GM12878 (cell line): ENCODE measurements at regions of chr9 and their contacts with region 1.

Region 1: GRCh38 chr9:7320139-7320538 is 479.4 kb downstream of the DMAC1 start:
- DNase-seq: no peak
- ATAC-seq: peak; percentile 39; the same call in 2 of the 3 replicates
- H3K4me3 ChIP-seq: no peak overlapping the region
- H3K27ac ChIP-seq: no peak overlapping the region
- H3K4me1 ChIP-seq: no peaks in the 10 kb centered on the region
- H3K27me3 ChIP-seq: no peaks in the 10 kb centered on the region
- CTCF ChIP-seq: no peak
- EP300 ChIP-seq: no peak
- POLR2A ChIP-seq: no peak
- RAD21 ChIP-seq: no peak

Region 2: DNA sequence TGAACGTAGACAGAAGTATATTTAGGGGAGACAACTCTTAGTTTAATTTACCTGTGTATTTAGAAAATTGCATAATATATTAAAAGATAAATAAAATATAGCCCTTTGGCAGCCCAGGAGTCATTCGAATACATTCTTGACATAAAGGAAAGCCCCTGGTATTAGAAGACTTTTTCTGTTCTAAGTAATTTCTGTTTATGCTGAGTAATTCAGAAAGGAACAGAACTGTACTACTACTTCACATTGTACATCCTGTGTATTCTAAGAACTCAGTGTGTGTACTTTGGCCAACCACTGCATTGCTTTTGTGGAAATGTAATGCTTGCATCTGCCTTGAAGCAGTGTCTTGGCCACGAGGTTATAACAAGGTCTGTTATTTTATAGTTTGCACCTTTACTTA is 426.0 kb before region 1 on chr9:
- CTCF ChIA-PET with region 1: no interaction called
- POLR2A ChIA-PET with region 1: no interaction called
- RAD21 ChIA-PET with region 1: no interaction called
- SMC1A ChIA-PET with region 1: no interaction called
- in situ Hi-C with region 1: no loop called
- intact Hi-C with region 1: no loop called
- DNase-seq: peak; percentile 63
- ATAC-seq: peak; percentile 96
- H3K4me3 ChIP-seq: no peak overlapping the region
- H3K27ac ChIP-seq: peak overlapping the region; percentile 56
- H3K4me1 ChIP-seq: peaks cover 28% of the 10 kb centered on the region
- H3K27me3 ChIP-seq: no peaks in the 10 kb centered on the region
- CTCF ChIP-seq: no peak
- EP300 ChIP-seq: peak in 1 of 2 experiments; percentile 75; a peak in 2 of 4 replicates
- POLR2A ChIP-seq: no peak
- RAD21 ChIP-seq: no peak

Region 3: GRCh38 chr9:7216004-7216831 is 103.9 kb before region 1 on chr9:
- CTCF ChIA-PET with region 1: no interaction called
- POLR2A ChIA-PET with region 1: no interaction called
- RAD21 ChIA-PET with region 1: no interaction called
- SMC1A ChIA-PET with region 1: no interaction called
- in situ Hi-C with region 1: loop called (anchors 25 kb)
- intact Hi-C with region 1: no loop called
- DNase-seq: no peak
- ATAC-seq: no peak
- H3K4me3 ChIP-seq: no peak overlapping the region
- H3K27ac ChIP-seq: no peak overlapping the region
- H3K4me1 ChIP-seq: no peaks in the 10 kb centered on the region
- H3K27me3 ChIP-seq: no peaks in the 10 kb centered on the region; a peak in 1 of 4 replicates
- CTCF ChIP-seq: no peak
- EP300 ChIP-seq: no peak
- POLR2A ChIP-seq: no peak
- RAD21 ChIP-seq: no peak

Region 4: GRCh38 chr9:7273391-7273974 is 46.7 kb before region 1 on chr9:
- CTCF ChIA-PET with region 1: no interaction called
- POLR2A ChIA-PET with region 1: no interaction called
- RAD21 ChIA-PET with region 1: no interaction called
- SMC1A ChIA-PET with region 1: no interaction called
- in situ Hi-C with region 1: no loop called
- intact Hi-C with region 1: no loop called
- DNase-seq: no peak
- ATAC-seq: 0 out of 3 replicates have a peak, but pooled peaks have one; percentile 34
- H3K4me3 ChIP-seq: no peak overlapping the region
- H3K27ac ChIP-seq: no peak overlapping the region
- H3K4me1 ChIP-seq: no peaks in the 10 kb centered on the region
- H3K27me3 ChIP-seq: peaks cover 0 to 4% of the 10 kb centered on the region in 2 experiments; a peak in 1 of 4 replicates
- CTCF ChIP-seq: peak; percentile 18 to 33 (median 22); a peak in 3 of 6 replicates
- EP300 ChIP-seq: no peak
- POLR2A ChIP-seq: no peak
- RAD21 ChIP-seq: peak; percentile 50

Region 5: GRCh38 chr9:7467186-7467585 is 147.0 kb after region 1 on chr9:
- CTCF ChIA-PET with region 1: no interaction called
- POLR2A ChIA-PET with region 1: no interaction called
- RAD21 ChIA-PET with region 1: no interaction called
- SMC1A ChIA-PET with region 1: no interaction called
- in situ Hi-C with region 1: no loop called
- intact Hi-C with region 1: no loop called
- DNase-seq: no peak
- ATAC-seq: no peak
- H3K4me3 ChIP-seq: no peak overlapping the region
- H3K27ac ChIP-seq: no peak overlapping the region
- H3K4me1 ChIP-seq: no peaks in the 10 kb centered on the region
- H3K27me3 ChIP-seq: no peaks in the 10 kb centered on the region
- CTCF ChIP-seq: no peak
- EP300 ChIP-seq: no peak
- POLR2A ChIP-seq: no peak
- RAD21 ChIP-seq: no peak